ENCODE measurements at regions of chr2 and their contacts with region 1.

Region 1: DNA sequence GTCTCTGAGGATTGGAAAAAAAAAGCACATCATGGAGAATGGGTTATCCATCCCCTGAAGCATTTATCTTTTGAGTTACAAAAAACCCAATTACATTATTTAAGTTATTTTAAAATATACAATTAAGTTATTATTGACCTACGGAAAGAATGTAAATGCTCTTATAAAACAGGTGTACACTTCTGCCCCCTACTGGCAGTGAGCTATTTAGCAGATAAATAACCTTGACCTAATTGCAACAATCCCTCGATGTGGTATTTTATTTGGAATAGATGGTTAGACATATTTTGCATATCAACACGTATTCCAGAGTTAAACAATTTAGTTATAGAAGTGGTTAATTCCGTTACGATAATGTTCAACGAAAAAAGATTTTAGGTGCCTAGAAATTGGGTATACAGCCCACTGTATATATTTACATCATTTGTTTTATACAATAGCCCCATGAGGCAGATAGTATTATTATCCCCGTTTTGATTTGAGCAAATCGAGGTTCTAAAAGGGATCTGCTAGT is 9.1 kb upstream of the DAW1 start:
- DNase-seq: peak; percentile 70
- H3K4me3 ChIP-seq: no peak overlapping the region
- H3K27ac ChIP-seq: peak overlapping the region; percentile 75
- H3K4me1 ChIP-seq: peaks cover 23% of the 10 kb centered on the region
- H3K27me3 ChIP-seq: no peaks in the 10 kb centered on the region
- CTCF ChIP-seq: peak; percentile 46 to 54
- POLR2A ChIP-seq: no peak

Region 2: DNA sequence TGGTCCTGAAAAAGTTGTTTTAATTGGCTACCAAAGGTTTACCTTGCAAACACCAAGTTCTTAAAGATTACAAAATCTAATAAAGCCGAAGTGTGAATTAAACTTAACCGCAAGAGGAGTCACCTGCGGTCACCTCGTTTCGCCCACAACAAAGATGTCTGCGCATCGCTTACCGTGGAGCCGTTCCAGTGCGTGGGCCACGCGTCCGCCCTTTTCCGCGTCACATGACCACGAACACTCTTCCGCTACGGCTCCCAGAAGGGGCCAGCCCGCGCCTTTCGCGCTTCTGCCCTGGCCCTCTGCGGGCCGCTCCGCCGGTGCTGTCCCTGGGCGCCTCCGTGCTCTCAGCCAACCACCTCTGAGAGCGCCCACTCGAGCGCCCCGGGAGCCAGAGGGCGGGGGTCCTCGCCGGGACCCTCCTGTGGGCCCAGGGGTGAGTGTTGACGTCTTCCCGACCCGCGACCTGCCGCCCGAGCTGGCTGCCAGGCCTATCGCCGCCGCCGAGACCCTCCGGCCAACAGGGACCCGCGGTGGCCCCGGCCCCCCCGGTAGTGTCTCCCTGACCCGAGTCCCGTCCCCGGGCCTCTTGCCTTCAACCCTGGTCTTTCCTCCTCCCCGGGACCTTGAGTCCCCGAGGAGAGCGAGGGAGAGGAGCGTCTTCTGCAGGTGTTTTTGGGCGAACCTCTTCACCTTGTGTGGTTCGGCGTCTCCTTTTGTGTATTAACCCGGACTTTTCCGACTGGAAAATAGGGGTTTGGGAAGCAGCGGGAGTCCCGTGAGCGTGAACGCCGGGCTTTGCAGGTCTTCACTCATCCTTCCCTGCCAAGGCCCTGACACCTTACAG is 537.1 kb before region 1 on chr2 and contains the start of gene MFF:
- CTCF ChIA-PET with region 1: no interaction called
- POLR2A ChIA-PET with region 1: no interaction called
- dilution Hi-C with region 1: no loop called
- intact Hi-C with region 1: loop called (anchors 5 kb)
- DNase-seq: peak; percentile 90
- H3K4me3 ChIP-seq: peak within 1 kb of the TSS; percentile 82 to 94 (median 85)
- H3K27ac ChIP-seq: peak within 1 kb of the TSS; percentile 59
- H3K4me1 ChIP-seq: peaks cover 12% of the 10 kb centered on the region
- H3K27me3 ChIP-seq: no peaks in the 10 kb centered on the region
- CTCF ChIP-seq: no peak
- POLR2A ChIP-seq: peak; percentile 82
- total RNA-seq, gene MFF: 60.4 and 65.1 TPM in 2 replicates

Region 3: DNA sequence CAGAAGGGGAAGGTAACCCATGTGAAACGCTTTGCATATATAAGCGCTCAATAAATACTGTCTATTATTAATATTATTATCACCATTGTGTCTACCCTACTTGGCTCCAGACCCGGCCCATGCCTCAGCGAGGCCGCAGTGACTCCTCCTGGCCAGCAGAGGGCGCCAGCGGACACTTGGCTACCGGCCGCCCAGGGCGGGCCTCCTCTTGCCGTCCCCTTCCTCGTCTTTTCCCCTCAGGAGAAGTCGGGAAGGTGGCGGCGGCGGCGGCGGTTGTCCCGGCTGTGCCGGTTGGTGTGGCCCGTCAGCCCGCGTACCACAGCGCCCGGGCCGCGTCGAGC is 390.4 kb before region 1 on chr2 and contains the start of gene AGFG1:
- CTCF ChIA-PET with region 1: no interaction called
- POLR2A ChIA-PET with region 1: no interaction called
- dilution Hi-C with region 1: no loop called
- intact Hi-C with region 1: loop called (anchors 5 kb)
- DNase-seq: peak; percentile 85
- H3K4me3 ChIP-seq: peak within 1 kb of the TSS; percentile 76 to 100 (median 85)
- H3K27ac ChIP-seq: peak within 1 kb of the TSS; percentile 67
- H3K4me1 ChIP-seq: peaks cover 15% of the 10 kb centered on the region
- H3K27me3 ChIP-seq: no peaks in the 10 kb centered on the region
- CTCF ChIP-seq: peak; percentile 98 to 99
- POLR2A ChIP-seq: peak; percentile 55
- total RNA-seq, gene AGFG1: 69.2 and 87.9 TPM in 2 replicates

Region 4: GRCh38 chr2:227759411-227760113 is 102.7 kb before region 1 on chr2:
- CTCF ChIA-PET with region 1: no interaction called
- POLR2A ChIA-PET with region 1: no interaction called
- dilution Hi-C with region 1: no loop called
- intact Hi-C with region 1: no loop called
- DNase-seq: no peak
- H3K4me3 ChIP-seq: no peak overlapping the region
- H3K27ac ChIP-seq: no peak overlapping the region
- H3K4me1 ChIP-seq: no peaks in the 10 kb centered on the region
- H3K27me3 ChIP-seq: no peaks in the 10 kb centered on the region
- CTCF ChIP-seq: no peak
- POLR2A ChIP-seq: no peak

Region 5: GRCh38 chr2:227774011-227774624 is 88.2 kb before region 1 on chr2:
- CTCF ChIA-PET with region 1: interaction called, 69 read pairs
- POLR2A ChIA-PET with region 1: no interaction called
- dilution Hi-C with region 1: no loop called
- intact Hi-C with region 1: loop called (anchors 1 kb)
- DNase-seq: peak; percentile 22
- H3K4me3 ChIP-seq: no peak overlapping the region
- H3K27ac ChIP-seq: no peak overlapping the region
- H3K4me1 ChIP-seq: no peaks in the 10 kb centered on the region
- H3K27me3 ChIP-seq: no peaks in the 10 kb centered on the region
- CTCF ChIP-seq: peak; percentile 25 to 31
- POLR2A ChIP-seq: no peak

Region 6: GRCh38 chr2:227846831-227847230 is 15.5 kb before region 1 on chr2:
- CTCF ChIA-PET with region 1: interaction called, 10 read pairs
- POLR2A ChIA-PET with region 1: no interaction called
- dilution Hi-C with region 1: no loop called
- intact Hi-C with region 1: no loop called
- DNase-seq: no peak
- H3K4me3 ChIP-seq: no peak overlapping the region
- H3K27ac ChIP-seq: no peak overlapping the region
- H3K4me1 ChIP-seq: no peaks in the 10 kb centered on the region
- H3K27me3 ChIP-seq: no peaks in the 10 kb centered on the region
- CTCF ChIP-seq: no peak
- POLR2A ChIP-seq: no peak

Region 7: GRCh38 chr2:227884511-227884947 is 22.2 kb after region 1 on chr2:
- CTCF ChIA-PET with region 1: interaction called, 30 read pairs
- POLR2A ChIA-PET with region 1: no interaction called
- dilution Hi-C with region 1: no loop called
- intact Hi-C with region 1: loop called (anchors 1 kb)
- DNase-seq: peak; percentile 77
- H3K4me3 ChIP-seq: no peak overlapping the region
- H3K27ac ChIP-seq: no peak overlapping the region
- H3K4me1 ChIP-seq: peaks cover 4% of the 10 kb centered on the region
- H3K27me3 ChIP-seq: no peaks in the 10 kb centered on the region
- CTCF ChIP-seq: peak; percentile 95 to 96
- POLR2A ChIP-seq: no peak